Posterior cingulate gyrus (tissue), 11 donors: ENCODE measurements at regions of chr2 and their contacts with region 1.

Region 1: GRCh38 chr2:104849618-104850141 is 4.2 kb upstream of the POU3F3 start:
- DNase-seq: peak in 9 of 10 donors; percentile 76 to 97 (median 90)

Region 2: DNA sequence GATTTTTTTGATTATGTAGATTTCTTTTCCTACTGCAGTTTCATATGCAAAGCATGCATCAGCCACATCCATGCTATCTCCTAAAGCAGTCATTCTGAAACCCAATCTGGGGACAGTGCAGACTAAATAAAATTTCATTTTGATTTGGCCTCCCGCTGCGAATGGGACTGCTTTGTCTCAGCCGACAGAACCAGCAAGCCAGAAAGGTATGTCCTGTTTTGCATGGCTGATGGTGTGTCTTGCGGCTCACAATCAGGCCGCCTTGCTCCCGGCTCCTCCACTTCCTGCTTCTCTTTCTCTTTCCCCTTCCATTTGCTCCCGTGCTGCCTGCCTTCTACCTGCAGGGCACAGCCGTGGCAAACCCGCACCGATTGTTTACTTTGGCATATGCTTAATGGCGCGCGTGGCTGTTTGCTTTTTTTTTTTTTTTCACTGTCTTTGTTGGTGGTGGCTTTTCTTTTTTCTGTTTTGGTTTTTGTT is 415.3 kb before region 1 on chr2:
- intact Hi-C with region 1: loop called (anchors 5 kb)
- DNase-seq: peak in 6 of 10 donors; percentile 42 to 87 (median 44)

Region 3: GRCh38 chr2:104902317-104902716 is 52.6 kb after region 1 on chr2:
- intact Hi-C with region 1: no loop called
- DNase-seq: no peak

Region 4: GRCh38 chr2:104952976-104953375 is 103.3 kb after region 1 on chr2:
- intact Hi-C with region 1: no loop called
- DNase-seq: no peak